BJ (cell line): ENCODE measurements at regions of chr16 and their contacts with region 1.

Region 1: GRCh38 chr16:10441726-10442125 is 55.9 kb downstream of the ATF7IP2 start:
- DNase-seq: no peak
- H3K4me3 ChIP-seq: no peak overlapping the region
- H3K27me3 ChIP-seq: no peaks in the 10 kb centered on the region
- CTCF ChIP-seq: no peak

Region 2: DNA sequence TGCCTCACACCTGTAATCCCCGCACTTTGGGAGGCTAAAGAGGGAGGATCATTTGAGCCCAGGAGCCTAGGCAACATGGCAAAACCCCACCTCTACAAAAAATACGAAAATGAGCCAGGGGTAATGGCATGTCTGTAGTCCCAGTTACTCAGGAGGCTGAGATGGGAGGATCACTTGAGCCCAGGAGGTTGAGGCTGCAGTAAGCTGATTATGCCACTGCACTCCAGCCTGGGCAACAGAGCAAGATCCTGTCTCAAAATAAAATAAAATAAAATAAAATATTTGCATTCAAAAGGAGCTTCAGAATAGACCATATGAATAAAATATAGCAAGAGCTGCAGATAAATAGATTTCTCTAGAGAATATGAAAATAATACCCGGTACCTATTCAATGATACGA is 127.4 kb before region 1 on chr16:
- CTCF ChIA-PET with region 1: no interaction called
- POLR2A ChIA-PET with region 1: interaction called, 12 read pairs
- DNase-seq: no peak
- H3K4me3 ChIP-seq: no peak overlapping the region
- H3K27me3 ChIP-seq: no peaks in the 10 kb centered on the region
- CTCF ChIP-seq: no peak

Region 3: GRCh38 chr16:10412935-10413601 is 28.7 kb before region 1 on chr16:
- CTCF ChIA-PET with region 1: no interaction called
- POLR2A ChIA-PET with region 1: interaction called, 11 read pairs
- DNase-seq: no peak
- H3K4me3 ChIP-seq: no peak overlapping the region
- H3K27me3 ChIP-seq: no peaks in the 10 kb centered on the region
- CTCF ChIP-seq: no peak